Activated B cell treated with CpG ODN at 0.5 μM for 24 hours (primary cell): ENCODE measurements at regions of chr15 and their contacts with region 1.

Region 1: DNA sequence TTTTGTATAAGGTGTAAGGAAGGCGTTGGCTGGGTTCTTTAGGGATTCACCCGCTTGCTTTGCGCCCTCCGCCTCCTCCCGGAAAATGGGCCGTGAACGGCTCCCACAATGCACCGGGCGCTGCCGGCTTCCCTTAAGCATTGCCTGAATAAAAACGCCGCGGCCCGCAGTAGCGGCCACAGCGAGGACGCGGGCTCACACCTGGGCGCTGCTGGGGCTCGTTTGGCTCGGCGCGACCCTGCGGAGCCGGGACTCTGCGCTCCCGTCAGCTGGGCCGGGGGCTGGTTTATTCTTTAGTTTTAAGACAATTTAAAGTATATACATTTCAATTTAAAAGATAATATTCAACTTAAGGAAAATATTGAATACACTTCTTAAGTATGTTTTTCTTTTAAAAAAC is 343.5 kb upstream of the RGMA start:
- DNase-seq: no peak
- ATAC-seq: no peak
- H3K4me3 Mint-ChIP-seq: no peak overlapping the region
- H3K27ac Mint-ChIP-seq: no peak overlapping the region
- H3K4me1 Mint-ChIP-seq: no peaks in the 10 kb centered on the region
- H3K27me3 Mint-ChIP-seq: no peaks in the 10 kb centered on the region
- CTCF ChIP-seq: no peak

Region 2: DNA sequence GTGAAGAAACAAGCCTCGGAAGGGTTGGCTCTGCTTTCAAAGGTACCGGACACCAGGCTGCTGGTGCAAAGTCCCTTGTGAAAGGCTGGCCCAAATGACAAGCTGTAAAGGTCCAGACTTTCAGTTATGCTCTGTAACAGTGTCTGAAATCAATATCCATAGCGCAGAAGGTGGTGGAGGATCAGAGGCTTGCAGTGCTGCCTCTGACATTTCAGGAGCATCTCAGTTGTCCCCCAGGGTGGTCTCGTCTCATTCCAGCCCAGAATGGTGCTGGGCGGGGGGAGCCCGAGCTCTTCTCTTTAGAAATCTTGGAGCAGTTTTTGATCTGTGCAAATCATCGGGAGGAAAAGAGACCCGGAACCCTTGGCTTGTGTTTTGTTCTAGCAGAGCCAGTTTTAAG is 58.8 kb after region 1 on chr15:
- CTCF ChIA-PET with region 1: no interaction called
- POLR2A ChIA-PET with region 1: interaction called, 4 read pairs
- intact Hi-C with region 1: loop called (anchors 2 kb)
- DNase-seq: no peak
- ATAC-seq: no peak
- H3K4me3 Mint-ChIP-seq: no peak overlapping the region
- H3K27ac Mint-ChIP-seq: no peak overlapping the region
- H3K4me1 Mint-ChIP-seq: no peaks in the 10 kb centered on the region
- H3K27me3 Mint-ChIP-seq: no peaks in the 10 kb centered on the region
- CTCF ChIP-seq: no peak